ENCODE measurements at regions of chr16 and their contacts with region 1.

Region 1: DNA sequence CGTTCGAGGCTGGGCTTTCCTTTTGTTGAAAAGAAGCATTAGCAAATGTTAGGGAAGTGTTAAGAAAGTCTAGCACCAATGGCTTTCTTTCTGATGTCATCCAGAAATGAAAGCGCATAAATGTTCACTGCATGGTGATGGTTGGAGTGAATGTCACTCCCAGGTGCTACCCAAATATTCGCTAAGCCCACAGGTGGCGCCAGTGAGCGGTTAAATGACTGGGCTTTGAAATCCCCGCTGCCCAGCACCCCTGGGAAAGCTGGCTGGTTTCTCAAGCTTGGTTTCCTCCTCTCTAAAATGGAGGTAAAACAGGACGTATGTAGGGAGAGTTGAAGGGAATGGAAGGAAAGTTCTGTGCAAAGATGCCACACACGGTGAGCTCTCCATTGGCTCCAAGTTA is 104.4 kb downstream of the IRX5 start:
- DNase-seq: peak; percentile 45
- CTCF ChIP-seq: peak; percentile 18

Region 2: GRCh38 chr16:55048745-55049144 is 13.7 kb after region 1 on chr16:
- CTCF ChIA-PET with region 1: interaction called, 10 read pairs
- POLR2A ChIA-PET with region 1: no interaction called
- DNase-seq: no peak
- CTCF ChIP-seq: no peak

Region 3: GRCh38 chr16:55257966-55258613 is 223.1 kb after region 1 on chr16:
- CTCF ChIA-PET with region 1: interaction called, 10 read pairs
- POLR2A ChIA-PET with region 1: no interaction called
- DNase-seq: peak; percentile 29
- CTCF ChIP-seq: peak; percentile 37